ENCODE measurements at regions of chr22 and their contacts with region 1.

Region 1: DNA sequence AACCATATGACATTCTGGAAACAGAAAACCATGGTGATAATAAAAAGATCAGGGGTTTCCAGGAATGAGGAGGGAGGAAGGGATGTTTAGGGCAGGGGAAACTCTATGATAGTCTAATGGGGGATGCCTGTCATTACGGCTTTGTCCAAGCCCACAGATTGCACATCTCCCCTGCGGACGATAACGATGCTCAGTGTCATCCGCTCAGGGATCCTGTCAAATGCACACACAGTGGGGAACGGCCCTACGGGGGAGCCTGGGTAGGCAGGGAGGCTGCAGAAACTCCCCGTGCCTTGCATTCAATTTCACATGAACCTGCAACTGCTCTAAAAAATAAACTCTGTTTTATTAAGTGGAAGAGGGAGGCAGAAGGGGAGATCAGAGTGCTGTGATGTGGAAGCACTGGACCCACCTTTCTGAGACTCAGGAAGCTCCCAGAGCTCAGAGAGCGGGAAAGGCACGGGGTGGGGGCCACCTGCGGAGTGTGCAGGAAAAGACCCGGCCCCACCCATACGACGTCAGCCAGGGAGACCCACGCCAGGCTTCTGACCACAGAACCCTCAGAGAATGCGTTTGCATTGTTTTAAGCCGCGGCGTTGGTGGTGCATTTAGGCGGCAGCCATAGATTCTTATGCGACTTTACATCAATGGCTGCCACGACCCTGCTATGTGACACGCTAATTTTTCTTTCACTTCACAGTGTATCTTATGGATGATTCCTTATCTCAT is 543.5 kb downstream of the BRD1 start:
- DNase-seq: no peak
- ATAC-seq: no peak
- H3K4me3 ChIP-seq: no peak overlapping the region
- H3K27ac ChIP-seq: no peak overlapping the region
- H3K4me1 ChIP-seq: no peaks in the 10 kb centered on the region
- H3K27me3 ChIP-seq: no peaks in the 10 kb centered on the region
- CTCF ChIP-seq: no peak
- POLR2A ChIP-seq: no peak

Region 2: DNA sequence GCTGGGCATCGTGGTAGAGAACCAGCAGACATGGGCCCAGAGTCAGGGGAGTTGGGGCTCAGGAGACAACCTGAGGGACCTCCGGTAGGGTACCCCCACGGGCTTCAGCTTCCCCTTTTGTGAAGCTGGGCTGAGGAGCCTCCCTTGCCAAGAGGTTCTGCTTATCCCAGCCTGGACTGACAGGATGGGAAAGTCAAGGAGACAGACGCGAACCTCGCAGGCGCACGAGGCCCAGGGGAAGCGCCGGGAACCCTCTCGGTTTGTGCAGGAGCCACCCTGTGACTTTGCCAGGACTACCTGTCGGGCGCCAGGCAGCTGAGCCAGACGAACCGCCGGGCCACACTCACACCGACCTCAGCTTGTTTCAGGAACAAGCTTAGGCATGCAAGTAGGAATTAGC is 22.6 kb before region 1 on chr22:
- intact Hi-C with region 1: loop called (anchors 2 kb)
- DNase-seq: no peak
- ATAC-seq: no peak
- H3K4me3 ChIP-seq: no peak overlapping the region
- H3K27ac ChIP-seq: no peak overlapping the region
- H3K4me1 ChIP-seq: no peaks in the 10 kb centered on the region
- H3K27me3 ChIP-seq: peaks cover 0 to 2% of the 10 kb centered on the region in 2 donors
- CTCF ChIP-seq: no peak
- POLR2A ChIP-seq: no peak

Region 3: DNA sequence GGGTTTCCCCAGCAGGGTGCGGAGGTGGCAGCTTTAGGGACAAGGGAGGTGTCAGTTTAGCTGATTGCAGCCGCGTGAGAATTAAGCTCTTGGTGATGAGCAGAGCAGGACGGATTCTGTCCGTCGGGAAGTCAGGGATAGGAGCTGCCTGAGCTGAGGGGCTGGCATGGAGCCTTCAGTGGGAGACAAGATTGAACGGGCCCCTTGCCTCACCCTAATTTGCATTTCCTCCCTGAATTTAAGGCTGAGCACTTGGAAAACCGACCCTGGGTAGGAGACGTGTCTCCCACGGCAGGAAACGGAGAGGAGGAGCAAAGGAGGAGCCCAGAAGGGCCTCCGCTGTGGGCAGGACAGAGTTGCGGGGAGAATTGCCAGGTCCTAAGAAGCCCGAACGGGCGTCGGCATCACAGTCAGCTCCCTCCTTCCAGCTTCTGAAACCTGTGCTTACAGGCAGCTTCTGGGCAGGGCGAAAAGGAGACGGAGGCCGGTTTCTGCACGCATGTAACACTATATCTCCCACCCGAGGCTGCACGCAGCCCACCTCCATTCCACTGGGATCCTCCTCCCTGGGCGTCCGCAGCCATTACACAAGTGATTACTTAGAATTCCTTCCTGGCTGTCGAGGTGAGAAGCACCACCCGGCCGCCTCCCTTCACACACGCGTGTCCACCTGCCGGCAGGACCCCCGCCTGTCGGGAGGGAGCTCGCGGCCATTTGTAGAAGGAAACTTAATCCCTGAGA is 197.6 kb after region 1 on chr22:
- intact Hi-C with region 1: no loop called
- DNase-seq: no peak
- ATAC-seq: no peak
- H3K4me3 ChIP-seq: no peak overlapping the region
- H3K27ac ChIP-seq: no peak overlapping the region
- H3K4me1 ChIP-seq: no peaks in the 10 kb centered on the region
- H3K27me3 ChIP-seq: peaks cover 0 to 5% of the 10 kb centered on the region in 2 donors
- CTCF ChIP-seq: no peak
- POLR2A ChIP-seq: no peak